ENCODE measurements at regions of chr3 and their contacts with region 1.

Region 1: DNA sequence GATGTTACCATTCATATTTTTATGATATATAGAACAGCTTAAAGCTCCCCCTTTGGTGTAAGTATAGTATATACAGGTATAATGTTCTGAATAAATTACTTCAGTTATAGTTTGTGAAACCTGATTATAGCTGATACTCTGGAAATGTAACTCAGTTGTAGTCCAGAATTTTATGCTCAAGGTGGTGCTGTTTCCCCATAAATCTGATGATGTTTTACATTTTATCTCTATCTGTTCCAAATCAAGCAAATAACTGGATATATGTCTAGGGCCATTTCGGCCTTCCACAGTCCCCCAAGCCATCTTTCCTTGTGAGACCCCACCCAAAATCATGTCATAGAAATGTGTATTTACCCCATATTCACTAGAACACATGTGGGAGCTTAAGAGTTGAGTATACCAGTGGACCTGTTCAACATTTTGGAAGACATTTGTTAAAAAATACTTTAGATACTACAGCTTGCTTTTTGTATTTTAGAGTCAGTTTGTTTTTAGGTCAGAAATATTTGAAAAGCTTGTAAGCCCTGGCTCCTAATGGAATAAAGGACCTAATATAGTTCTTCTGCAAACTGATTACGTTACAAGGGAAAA is 107.1 kb downstream of the ATG7 start:
- DNase-seq: peak; percentile 31
- H3K4me3 ChIP-seq: no peak overlapping the region
- H3K27ac ChIP-seq: no peak overlapping the region
- H3K4me1 ChIP-seq: peaks cover 13% of the 10 kb centered on the region
- H3K27me3 ChIP-seq: no peaks in the 10 kb centered on the region
- CTCF ChIP-seq: peak; percentile 53 to 61

Region 2: GRCh38 chr3:11452885-11453847 is 73.8 kb after region 1 on chr3:
- CTCF ChIA-PET with region 1: no interaction called
- dilution Hi-C with region 1: no loop called
- in situ Hi-C with region 1: no loop called
- intact Hi-C with region 1: no loop called
- DNase-seq: peak; percentile 25
- H3K4me3 ChIP-seq: no peak overlapping the region
- H3K27ac ChIP-seq: no peak overlapping the region
- H3K4me1 ChIP-seq: no peaks in the 10 kb centered on the region
- H3K27me3 ChIP-seq: no peaks in the 10 kb centered on the region
- CTCF ChIP-seq: no peak

Region 3: DNA sequence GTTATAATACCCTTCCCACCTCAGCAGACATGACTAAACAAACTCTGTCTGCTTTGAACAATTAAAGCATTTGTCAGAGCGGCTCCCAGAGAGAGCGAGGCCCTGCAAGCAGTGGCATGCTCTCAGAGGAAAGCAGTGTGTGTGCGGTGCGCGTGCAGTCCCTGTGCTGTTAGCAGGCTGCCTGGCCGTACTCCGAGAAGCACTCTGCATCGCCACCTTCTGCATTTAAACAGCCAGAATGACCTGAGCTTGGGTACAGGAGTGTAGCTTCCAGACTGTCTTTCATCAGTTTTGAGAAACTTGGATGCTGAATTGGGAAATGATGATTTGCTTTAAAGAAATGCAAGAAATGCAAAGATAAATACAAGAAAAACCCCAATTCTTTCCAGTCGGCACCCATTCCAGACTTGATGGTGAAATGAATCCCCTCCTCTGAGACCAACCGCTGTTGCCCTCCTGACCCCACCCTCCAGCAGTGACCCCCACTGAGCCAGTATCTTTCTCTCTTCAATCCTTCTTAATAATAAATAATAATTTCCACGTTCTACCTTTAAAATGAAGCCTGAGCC is 150.9 kb after region 1 on chr3:
- CTCF ChIA-PET with region 1: no interaction called
- dilution Hi-C with region 1: no loop called
- in situ Hi-C with region 1: no loop called
- intact Hi-C with region 1: loop called (anchors 1 kb)
- DNase-seq: peak; percentile 99
- H3K4me3 ChIP-seq: no peak overlapping the region
- H3K27ac ChIP-seq: peak overlapping the region; percentile 69
- H3K4me1 ChIP-seq: peaks cover 20% of the 10 kb centered on the region
- H3K27me3 ChIP-seq: no peaks in the 10 kb centered on the region
- CTCF ChIP-seq: peak; percentile 39 to 53

Region 4: DNA sequence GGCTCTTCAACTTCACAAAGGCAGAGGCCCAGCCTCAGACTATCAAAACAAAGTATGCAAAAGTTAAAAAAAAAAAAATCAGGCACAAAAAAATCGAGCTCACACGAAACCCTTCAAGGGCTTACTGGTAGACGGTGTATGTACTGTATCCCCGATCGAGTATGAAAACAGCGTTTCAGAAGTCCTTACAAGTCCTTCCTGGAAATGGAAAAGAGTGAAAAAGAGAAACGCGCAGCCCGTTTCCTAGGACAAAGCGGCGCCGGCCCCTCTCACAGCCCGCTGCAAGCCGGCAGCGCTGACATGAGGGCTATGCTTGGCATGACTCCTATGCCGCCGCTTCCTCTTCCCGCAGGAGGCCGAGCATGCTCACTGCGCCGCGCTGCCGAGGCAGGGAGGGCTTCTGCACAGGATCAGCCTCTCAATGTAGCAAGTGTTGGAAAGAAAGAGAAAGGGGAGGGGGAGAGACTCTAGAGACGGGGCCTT is 264.3 kb after region 1 on chr3 and contains the start of gene VGLL4:
- CTCF ChIA-PET with region 1: interaction called, 4 read pairs
- dilution Hi-C with region 1: no loop called
- in situ Hi-C with region 1: no loop called
- intact Hi-C with region 1: loop called (anchors 2 kb)
- DNase-seq: peak; percentile 77
- H3K4me3 ChIP-seq: peak within 1 kb of the TSS; percentile 57 to 65 (median 61)
- H3K27ac ChIP-seq: peak within 1 kb of the TSS; percentile 93
- H3K4me1 ChIP-seq: peaks cover 31% of the 10 kb centered on the region
- H3K27me3 ChIP-seq: no peaks in the 10 kb centered on the region
- CTCF ChIP-seq: peak; percentile 6 to 31
- total RNA-seq, gene VGLL4: 30.8 to 77.3 TPM

Region 5: DNA sequence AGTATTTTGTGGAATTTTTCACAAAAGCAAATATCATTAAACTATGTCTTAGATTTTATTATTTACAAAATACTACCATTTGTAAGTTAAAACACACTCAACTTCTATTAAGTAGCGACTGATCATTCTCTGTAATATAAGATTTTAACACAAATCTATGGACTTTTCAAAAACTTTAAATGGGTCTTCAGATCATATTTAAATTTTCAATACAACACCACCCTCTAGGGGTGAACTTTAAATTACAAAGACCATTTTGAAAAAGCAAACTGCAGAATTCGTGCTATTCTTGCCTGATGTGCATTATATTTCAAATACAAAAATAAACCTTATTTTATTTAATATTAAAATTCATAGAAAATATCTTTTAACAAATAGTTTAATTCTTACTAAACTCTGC is 272.6 kb after region 1 on chr3:
- CTCF ChIA-PET with region 1: interaction called, 6 read pairs
- dilution Hi-C with region 1: no loop called
- in situ Hi-C with region 1: loop called (anchors 10 kb)
- intact Hi-C with region 1: loop called (anchors 1 kb)
- DNase-seq: no peak
- H3K4me3 ChIP-seq: no peak overlapping the region
- H3K27ac ChIP-seq: no peak overlapping the region
- H3K4me1 ChIP-seq: no peaks in the 10 kb centered on the region
- H3K27me3 ChIP-seq: no peaks in the 10 kb centered on the region
- CTCF ChIP-seq: peak; percentile 26 to 29

Region 6: DNA sequence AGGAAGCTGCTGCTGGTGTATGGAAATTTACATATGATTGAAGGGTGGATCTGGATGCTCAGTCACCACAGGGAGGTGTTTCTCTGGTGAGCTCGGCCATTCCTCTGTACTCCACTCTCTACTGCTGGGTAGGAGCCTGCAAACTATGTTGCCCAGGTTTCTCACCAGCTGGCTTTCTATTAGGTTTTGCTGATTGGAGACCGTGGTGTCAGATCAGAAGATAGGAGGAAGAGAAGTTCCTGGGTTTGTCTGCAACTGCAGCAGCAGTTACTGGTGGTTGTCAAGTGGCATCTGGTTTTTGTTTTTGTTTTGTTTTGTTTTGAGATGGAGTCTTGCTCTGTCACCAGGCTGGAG is 405.7 kb after region 1 on chr3:
- CTCF ChIA-PET with region 1: no interaction called
- dilution Hi-C with region 1: loop called (anchors 25 kb)
- in situ Hi-C with region 1: no loop called
- intact Hi-C with region 1: no loop called
- DNase-seq: no peak
- H3K4me3 ChIP-seq: no peak overlapping the region
- H3K27ac ChIP-seq: no peak overlapping the region
- H3K4me1 ChIP-seq: no peaks in the 10 kb centered on the region
- H3K27me3 ChIP-seq: no peaks in the 10 kb centered on the region
- CTCF ChIP-seq: no peak

Region 7: GRCh38 chr3:11803977-11804892 is 424.9 kb after region 1 on chr3:
- CTCF ChIA-PET with region 1: no interaction called
- dilution Hi-C with region 1: loop called (anchors 25 kb)
- in situ Hi-C with region 1: loop called (anchors 10 kb)
- intact Hi-C with region 1: loop called (anchors 1 kb)
- DNase-seq: peak; percentile 40
- H3K4me3 ChIP-seq: no peak overlapping the region
- H3K27ac ChIP-seq: no peak overlapping the region
- H3K4me1 ChIP-seq: no peaks in the 10 kb centered on the region
- H3K27me3 ChIP-seq: no peaks in the 10 kb centered on the region
- CTCF ChIP-seq: peak; percentile 70 to 78

Region 8: DNA sequence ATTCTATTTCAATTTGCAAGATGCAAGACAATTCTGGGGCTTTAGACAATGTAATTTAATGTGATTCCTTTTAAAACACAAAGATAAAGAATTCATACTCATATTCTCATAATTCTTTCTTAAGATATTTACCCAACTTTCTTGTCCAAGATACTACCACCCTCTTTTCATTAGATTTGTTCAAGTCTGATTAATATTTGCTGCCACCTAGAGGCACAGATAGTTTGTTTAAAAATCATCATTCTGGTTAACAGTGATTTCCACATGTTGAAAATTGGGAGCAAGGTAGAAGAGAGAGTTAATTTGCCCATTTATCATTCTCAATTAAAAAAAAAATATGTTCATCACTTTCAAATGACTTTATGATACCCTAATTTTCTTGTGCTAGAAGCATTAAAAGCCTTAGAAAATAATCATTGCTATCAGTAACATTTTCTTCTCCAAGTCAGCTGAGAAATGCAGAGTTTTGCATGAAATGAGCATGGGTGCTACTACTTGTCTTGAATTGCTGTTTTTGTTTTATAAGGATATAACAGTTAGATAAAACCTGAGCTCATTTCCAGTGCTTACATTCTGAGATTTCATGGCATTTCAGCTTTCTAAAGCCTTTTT is 455.8 kb after region 1 on chr3:
- CTCF ChIA-PET with region 1: no interaction called
- dilution Hi-C with region 1: no loop called
- in situ Hi-C with region 1: no loop called
- intact Hi-C with region 1: loop called (anchors 1 kb)
- DNase-seq: no peak
- H3K4me3 ChIP-seq: no peak overlapping the region
- H3K27ac ChIP-seq: no peak overlapping the region
- H3K4me1 ChIP-seq: no peaks in the 10 kb centered on the region
- H3K27me3 ChIP-seq: no peaks in the 10 kb centered on the region
- CTCF ChIP-seq: peak; percentile 41 to 44